ENCODE measurements at regions of chr5 and their contacts with region 1.

Region 1: GRCh38 chr5:179494774-179495526 is 55.4 kb upstream of the RUFY1 start:
- DNase-seq: no peak
- ATAC-seq: no peak

Region 2: DNA sequence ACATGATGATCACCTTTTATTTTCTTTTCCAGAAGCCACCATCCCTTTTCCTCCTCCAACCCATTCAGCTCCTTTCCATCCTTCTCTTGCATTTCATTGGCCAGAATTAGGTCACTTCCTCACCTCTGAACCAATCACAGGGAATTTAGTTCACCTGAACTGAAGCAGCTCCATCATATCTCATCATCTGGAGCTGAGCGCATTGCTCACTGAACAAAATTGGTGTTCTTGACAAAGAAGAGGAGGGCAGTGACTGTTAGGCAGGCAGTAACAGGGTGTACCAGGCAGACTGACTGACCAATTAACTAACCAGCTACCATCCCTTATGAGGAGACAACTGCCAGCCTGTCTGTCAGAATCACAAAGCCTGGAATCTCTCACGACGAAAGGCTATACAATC is 762.7 kb before region 1 on chr5:
- intact Hi-C with region 1: loop called (anchors 5 kb)
- DNase-seq: no peak
- ATAC-seq: no peak

Region 3: DNA sequence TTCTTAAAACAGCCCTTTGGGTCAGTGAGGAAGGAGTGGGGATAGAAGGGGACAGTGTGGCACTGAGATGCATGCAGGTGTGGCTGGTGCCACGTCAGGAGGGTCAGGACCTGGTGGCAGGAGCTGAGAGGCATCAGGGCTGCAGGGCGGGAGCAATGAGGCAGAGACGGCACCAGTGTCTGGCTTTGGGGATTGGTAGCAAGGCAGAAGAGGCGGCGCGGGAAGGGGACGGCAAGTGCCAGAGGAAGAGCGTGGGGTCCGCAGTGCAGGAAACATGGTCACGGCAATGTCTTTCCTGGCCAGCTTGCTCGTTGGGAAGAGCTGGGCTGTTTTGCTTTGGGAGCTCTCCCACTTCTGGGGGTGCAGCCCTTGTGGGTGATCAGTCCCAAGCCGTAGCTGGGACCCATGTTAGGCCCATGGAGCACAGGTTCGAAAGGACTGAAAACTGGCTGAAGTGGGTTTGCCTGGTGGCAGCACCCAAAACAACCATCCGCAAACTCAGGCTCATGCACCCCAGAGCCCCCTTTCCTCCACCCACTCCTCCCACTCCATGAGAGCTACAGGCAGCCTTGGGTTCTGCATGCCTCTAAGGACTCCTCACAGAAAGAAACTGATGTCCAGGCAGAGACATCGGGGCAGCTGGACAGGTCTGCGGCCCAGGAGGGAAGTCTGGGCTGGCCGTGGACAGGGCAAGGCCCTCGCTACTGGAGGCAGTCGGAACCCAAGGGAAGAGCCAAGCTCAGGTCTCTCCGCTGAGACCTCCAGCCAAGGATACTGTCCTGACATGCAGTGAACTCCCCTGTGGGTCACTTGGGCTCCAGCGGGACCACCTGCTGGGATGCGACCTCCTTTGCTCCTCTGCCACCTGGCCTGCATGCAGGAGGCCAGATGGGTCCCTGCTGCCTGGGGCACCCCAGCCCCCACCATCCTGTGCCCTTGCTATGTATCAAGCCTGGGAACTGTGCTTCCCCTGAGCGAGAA is 330.3 kb before region 1 on chr5:
- intact Hi-C with region 1: loop called (anchors 5 kb)
- DNase-seq: no peak
- ATAC-seq: no peak